ENCODE measurements at regions of chr3 and their contacts with region 1.

Region 1: DNA sequence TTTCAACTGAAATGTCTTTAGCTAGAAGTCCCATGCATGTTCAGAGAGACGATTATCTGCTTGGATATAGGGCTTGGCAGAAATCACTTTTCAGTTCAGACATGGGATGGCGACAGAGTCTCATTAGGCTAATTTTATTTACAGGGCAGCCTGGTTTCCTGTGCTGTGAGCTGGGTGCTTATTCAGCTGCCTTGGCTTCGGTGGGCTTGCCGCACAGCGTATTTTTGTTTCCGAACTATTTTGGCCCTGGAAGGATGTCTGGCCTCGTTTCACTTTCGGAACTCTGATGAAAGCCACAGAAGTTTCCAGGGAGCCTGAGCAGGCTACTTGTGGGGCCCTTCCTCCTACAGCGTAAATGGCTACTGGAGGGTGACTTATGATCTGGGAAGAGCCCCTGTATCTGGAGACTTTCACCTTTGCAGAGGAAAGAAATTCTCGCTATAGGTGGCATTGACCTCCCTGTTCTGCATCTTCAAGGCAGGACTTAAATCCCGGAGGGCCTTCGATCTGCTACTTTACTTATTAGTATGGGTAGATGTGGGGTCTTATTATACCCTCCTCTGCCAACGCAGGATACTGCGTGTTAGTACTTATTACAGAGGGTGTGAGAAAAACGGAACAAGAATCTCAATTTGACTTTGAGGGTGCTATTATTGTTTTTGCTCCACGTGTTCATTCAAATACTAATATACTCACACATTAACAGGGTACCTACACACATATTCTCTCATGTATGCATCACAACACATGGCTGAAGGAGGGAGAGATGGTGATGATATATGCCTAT is 364.0 kb upstream of the RBMS3 start:
- DNase-seq: peak; percentile 87
- H3K4me3 ChIP-seq: peak overlapping the region; percentile 67
- H3K27ac ChIP-seq: peak overlapping the region; percentile 46
- H3K4me1 ChIP-seq: peaks cover 20% of the 10 kb centered on the region
- H3K27me3 ChIP-seq: no peaks in the 10 kb centered on the region

Region 2: GRCh38 chr3:29280404-29281093 is 363.6 kb after region 1 on chr3 and contains the start of gene RBMS3:
- in situ Hi-C with region 1: loop called (anchors 25 kb)
- DNase-seq: peak; percentile 97
- H3K4me3 ChIP-seq: peak within 1 kb of the TSS; percentile 87
- H3K27ac ChIP-seq: peak within 1 kb of the TSS; percentile 88
- H3K4me1 ChIP-seq: peaks cover 16% of the 10 kb centered on the region
- H3K27me3 ChIP-seq: no peaks in the 10 kb centered on the region
- total RNA-seq, gene RBMS3: 40.0 and 45.7 TPM in 2 replicates

Region 3: GRCh38 chr3:29764603-29765254 is 847.8 kb after region 1 on chr3:
- in situ Hi-C with region 1: loop called (anchors 25 kb)
- DNase-seq: peak; percentile 87
- H3K4me3 ChIP-seq: no peak overlapping the region; the same call in 1 of the 2 replicates
- H3K27ac ChIP-seq: peak overlapping the region; percentile 71
- H3K4me1 ChIP-seq: peaks cover 48% of the 10 kb centered on the region
- H3K27me3 ChIP-seq: no peaks in the 10 kb centered on the region

Measured in GM23248 (cell line).